Activated T-helper 1 cell treated with anti-CD3 and anti-CD28 coated beads, Interleukin-12 subunit alpha, Interleukin-12 subunit beta, Interleukin-2, Interleukin-4 antibody, amounts not matched to agents 30 ng/mL and 10 ng/mL and 1 ng/mL, durations not matched to agents 14 hours and 24 hours and 36 hours (primary cell): ENCODE measurements at regions of chr7 and their contacts with region 1.

Region 1: DNA sequence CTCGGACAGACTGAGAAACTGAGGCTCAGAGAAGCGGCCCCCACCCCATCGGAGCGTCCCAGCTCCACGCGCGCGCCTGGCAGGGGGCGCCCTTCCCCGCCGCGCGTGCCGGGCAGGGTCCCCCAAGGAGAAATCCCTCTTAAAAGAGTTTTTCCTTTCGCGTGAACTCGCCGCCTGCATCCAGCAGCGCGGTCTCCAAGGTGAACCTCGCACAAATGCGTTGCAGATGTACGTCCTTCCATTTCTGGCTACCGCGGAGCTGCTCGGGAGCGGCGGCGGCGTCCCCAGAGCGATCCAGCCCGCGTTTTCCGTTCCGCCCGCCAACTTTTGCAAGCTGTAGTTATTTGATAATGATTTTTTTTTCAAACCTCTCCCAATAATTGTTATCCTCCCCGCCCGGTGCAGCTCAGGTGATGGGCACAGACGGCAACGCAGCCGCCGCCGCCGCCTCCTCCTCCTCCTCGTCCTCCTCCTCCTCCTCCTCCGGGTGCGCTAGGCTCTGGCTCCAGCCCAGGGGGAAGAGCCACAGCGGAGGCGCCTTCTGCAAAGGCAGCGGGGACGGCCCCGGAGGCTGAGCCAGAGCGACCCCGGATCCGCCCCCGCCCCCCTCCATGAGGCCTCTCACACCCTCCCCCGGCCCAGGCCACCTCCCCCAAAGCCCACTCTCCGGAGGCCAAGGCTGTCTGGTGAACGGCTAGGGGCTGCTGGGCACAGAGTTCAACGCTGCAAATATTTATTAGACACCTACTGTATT is 74.0 kb upstream of the CUX1 start:
- DNase-seq: peak; percentile 61
- H3K4me3 Mint-ChIP-seq: peak overlapping the region; percentile 77
- H3K27ac Mint-ChIP-seq: no peak overlapping the region
- H3K4me1 Mint-ChIP-seq: peaks cover 31% of the 10 kb centered on the region
- H3K27me3 Mint-ChIP-seq: no peaks in the 10 kb centered on the region

Region 2: DNA sequence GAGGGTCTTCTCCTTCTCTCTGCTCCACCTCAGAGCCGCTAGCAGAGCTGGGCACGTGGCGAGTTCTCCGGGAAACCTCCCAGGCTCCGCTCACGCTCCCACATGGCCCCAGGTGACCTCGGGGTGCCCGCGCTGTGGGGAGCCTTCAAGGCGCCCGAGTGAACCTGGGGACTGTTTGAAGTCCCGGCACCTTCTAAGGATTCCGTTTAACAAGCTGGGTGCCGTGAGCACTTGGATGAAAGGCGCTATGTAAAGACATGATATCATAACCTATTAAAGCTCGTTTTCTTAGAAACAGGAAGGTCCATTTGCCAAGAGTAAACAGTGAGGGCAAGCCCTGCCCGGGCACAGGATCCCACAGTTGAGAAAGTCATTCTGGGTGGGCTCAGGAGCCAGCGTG is 98.5 kb before region 1 on chr7:
- intact Hi-C with region 1: no loop called
- DNase-seq: no peak
- H3K4me3 Mint-ChIP-seq: no peak overlapping the region
- H3K27ac Mint-ChIP-seq: no peak overlapping the region
- H3K4me1 Mint-ChIP-seq: no peaks in the 10 kb centered on the region
- H3K27me3 Mint-ChIP-seq: no peaks in the 10 kb centered on the region

Region 3: DNA sequence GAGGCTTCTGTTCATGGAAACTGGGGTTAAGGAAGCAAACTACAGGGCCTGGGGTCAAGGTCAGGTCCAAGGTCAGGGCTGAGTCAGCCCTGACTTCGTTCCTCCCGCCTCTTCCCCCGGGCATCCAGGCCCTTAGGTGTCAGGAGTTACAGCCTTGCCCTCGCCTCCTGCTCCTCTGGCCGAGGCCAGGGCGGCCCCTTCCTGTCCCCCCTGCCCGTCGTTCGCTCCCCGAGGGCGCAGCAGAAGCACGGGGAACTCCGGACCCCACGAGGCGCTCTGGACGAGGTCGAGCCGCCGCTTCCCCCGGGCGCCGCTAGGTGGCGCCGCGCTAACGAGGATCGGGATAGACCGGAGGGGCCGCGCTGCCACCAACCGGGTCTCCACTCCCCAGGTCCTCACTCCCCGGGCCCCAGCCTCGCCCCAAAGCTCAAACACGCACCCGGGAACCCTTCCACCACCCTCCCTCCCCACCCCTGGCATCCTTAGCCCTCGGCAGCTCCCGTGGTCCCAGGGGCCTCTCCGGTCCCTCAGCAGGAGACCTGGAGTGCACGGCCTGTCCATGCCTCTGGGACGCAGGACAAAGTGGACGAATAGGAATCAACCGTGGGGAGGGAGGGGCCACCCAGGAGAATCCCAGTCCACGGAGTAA is 55.1 kb before region 1 on chr7:
- intact Hi-C with region 1: loop called (anchors 1 kb)
- DNase-seq: peak; percentile 67
- H3K4me3 Mint-ChIP-seq: no peak overlapping the region
- H3K27ac Mint-ChIP-seq: no peak overlapping the region
- H3K4me1 Mint-ChIP-seq: peaks cover 6% of the 10 kb centered on the region
- H3K27me3 Mint-ChIP-seq: peaks cover 5% of the 10 kb centered on the region

Region 4: GRCh38 chr7:101754424-101755159 is 11.2 kb after region 1 on chr7:
- intact Hi-C with region 1: loop called (anchors 1 kb)
- DNase-seq: no peak
- H3K4me3 Mint-ChIP-seq: peak overlapping the region; percentile 84
- H3K27ac Mint-ChIP-seq: peak overlapping the region; percentile 78
- H3K4me1 Mint-ChIP-seq: peaks cover 15% of the 10 kb centered on the region
- H3K27me3 Mint-ChIP-seq: no peaks in the 10 kb centered on the region

Region 5: GRCh38 chr7:101804967-101805366 is 61.5 kb after region 1 on chr7:
- intact Hi-C with region 1: no loop called
- DNase-seq: no peak
- H3K4me3 Mint-ChIP-seq: no peak overlapping the region
- H3K27ac Mint-ChIP-seq: no peak overlapping the region
- H3K4me1 Mint-ChIP-seq: peaks cover 11% of the 10 kb centered on the region
- H3K27me3 Mint-ChIP-seq: peaks cover 24% of the 10 kb centered on the region